ENCODE measurements at regions of chr10 and their contacts with region 1.

Region 1: DNA sequence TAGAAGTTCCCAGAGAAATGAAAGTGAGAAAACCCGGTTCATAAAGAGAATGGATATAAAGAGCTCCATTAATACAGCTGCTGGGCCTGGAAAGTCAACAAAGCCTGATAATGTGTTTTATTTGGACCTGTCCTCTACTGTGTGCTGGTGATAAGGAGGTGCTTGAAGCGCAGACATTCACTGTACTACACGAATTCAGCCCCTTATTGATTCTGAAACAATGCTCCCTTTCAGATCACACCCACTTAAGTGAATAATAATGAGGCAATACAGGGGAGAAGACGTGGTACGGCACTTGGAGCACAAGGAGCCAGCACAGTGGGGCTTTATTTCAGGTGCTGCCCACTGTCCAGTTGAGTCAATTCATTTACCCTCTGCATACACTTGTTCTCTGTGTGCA is 260.8 kb downstream of the FGFR2 start:
- DNase-seq: no peak
- ATAC-seq: no peak
- H3K4me3 ChIP-seq: no peak overlapping the region
- H3K27ac ChIP-seq: no peak overlapping the region
- H3K4me1 ChIP-seq: no peaks in the 10 kb centered on the region
- H3K27me3 ChIP-seq: no peaks in the 10 kb centered on the region; the same call in 1 of the 2 replicates
- CTCF ChIP-seq: no peak
- POLR2A ChIP-seq: no peak
- RAD21 ChIP-seq: no peak

Region 2: GRCh38 chr10:121313119-121313875 is 24.1 kb before region 1 on chr10:
- CTCF ChIA-PET with region 1: no interaction called
- POLR2A ChIA-PET with region 1: no interaction called
- RAD21 ChIA-PET with region 1: no interaction called
- intact Hi-C with region 1: no loop called
- DNase-seq: no peak
- ATAC-seq: no peak
- H3K4me3 ChIP-seq: no peak overlapping the region
- H3K27ac ChIP-seq: no peak overlapping the region
- H3K4me1 ChIP-seq: no peaks in the 10 kb centered on the region
- H3K27me3 ChIP-seq: no peaks in the 10 kb centered on the region
- CTCF ChIP-seq: no peak
- POLR2A ChIP-seq: no peak
- RAD21 ChIP-seq: peak; percentile 40; the same call in 1 of the 2 replicates

Region 3: DNA sequence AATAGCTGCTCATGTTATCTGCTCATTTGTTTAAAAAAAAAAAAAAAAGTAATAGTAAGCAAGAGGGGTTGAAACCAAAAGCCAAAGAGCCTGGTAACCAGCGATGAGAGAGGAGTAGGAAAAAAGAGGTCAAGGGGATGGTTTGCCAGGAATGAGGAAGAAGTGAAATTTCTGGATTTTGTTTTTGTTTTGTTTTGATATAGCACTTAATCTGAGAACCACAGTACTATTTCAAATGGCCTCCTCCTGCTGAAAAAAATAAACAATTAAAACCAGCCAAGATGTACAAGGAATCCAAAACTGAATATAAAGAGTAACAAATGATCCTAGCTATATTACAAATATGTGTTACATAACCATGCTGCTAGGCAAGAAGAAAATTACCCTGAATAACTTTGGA is 47.7 kb after region 1 on chr10:
- CTCF ChIA-PET with region 1: no interaction called
- POLR2A ChIA-PET with region 1: no interaction called
- RAD21 ChIA-PET with region 1: no interaction called
- intact Hi-C with region 1: loop called (anchors 1 kb)
- DNase-seq: no peak
- ATAC-seq: no peak
- H3K4me3 ChIP-seq: no peak overlapping the region
- H3K27ac ChIP-seq: no peak overlapping the region
- H3K4me1 ChIP-seq: no peaks in the 10 kb centered on the region
- H3K27me3 ChIP-seq: no peaks in the 10 kb centered on the region
- CTCF ChIP-seq: no peak
- POLR2A ChIP-seq: no peak
- RAD21 ChIP-seq: no peak

Measured in HCT116 (cell line).